Heart left ventricle (tissue), 16 donors: ENCODE measurements at regions of chr10 and their contacts with region 1.

Region 1: GRCh38 chr10:92880233-92880861 is 32.0 kb downstream of the EXOC6 start:
- DNase-seq: peak in 1 of 5 donors; percentile 13
- ATAC-seq: peak in 3 of 4 donors; percentile 57 to 69 (median 59)
- H3K4me3 ChIP-seq: no peak overlapping the region
- H3K27ac ChIP-seq: no peak overlapping the region
- H3K4me1 ChIP-seq: peaks cover 0 to 31% (median 0%) of the 10 kb centered on the region in 12 donors
- H3K27me3 ChIP-seq: no peaks in the 10 kb centered on the region
- CTCF ChIP-seq: peak in 11 of 12 donors; percentile 33 to 76 (median 53)
- POLR2A ChIP-seq: no peak

Region 2: DNA sequence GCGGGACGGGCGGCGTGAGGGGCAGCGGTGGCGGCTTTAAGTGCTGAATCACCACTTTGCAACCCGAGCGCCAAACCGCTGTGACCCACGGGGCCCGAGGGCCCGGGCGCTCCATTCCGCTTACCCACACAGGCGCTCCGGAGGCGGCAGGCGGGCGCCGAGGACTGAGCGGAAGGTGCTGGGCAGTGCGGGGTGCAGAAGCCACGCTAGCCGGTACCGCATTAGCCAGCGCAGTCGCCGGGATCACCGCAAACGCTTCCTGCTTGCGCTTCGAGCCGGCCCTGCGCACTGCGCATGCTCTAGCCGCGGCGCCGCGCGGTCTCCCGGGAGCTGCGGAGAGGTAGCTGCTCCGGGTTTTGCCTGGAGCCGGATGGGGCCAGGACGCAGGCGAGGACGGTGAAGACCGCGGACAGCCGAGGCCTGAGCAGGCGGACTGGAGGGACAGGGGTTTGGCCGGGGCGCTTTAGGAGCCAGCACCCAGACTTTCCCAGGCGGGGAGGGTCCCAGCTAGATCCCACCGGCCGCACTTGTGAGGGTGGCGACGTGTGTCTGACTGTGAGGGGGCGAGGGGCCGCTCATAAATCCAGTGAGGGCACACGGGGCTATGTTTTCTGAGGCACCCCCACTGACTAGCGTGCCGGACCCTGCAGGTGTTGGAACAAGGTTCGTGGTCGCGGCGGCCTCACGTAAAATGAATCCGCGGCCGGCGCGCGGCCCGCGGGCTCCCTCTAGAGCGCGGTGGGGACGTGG is 306.4 kb before region 1 on chr10 and contains the start of gene IDE:
- intact Hi-C with region 1: loop called in 1 of 10 experiments (anchors 10 kb)
- DNase-seq: peak; percentile 89 to 95 (median 91)
- ATAC-seq: peak; percentile 95 to 98 (median 96)
- H3K4me3 ChIP-seq: peak within 1 kb of the TSS; percentile 71 to 98 (median 91)
- H3K27ac ChIP-seq: peak within 1 kb of the TSS; percentile 88 to 99 (median 93)
- H3K4me1 ChIP-seq: peaks cover 0 to 37% (median 22%) of the 10 kb centered on the region in 12 donors
- H3K27me3 ChIP-seq: no peaks in the 10 kb centered on the region
- CTCF ChIP-seq: peak; percentile 67 to 93 (median 84)
- POLR2A ChIP-seq: peak in 1 of 2 donors; percentile 56
- total RNA-seq, gene IDE: 24.6 to 51.3 (median 47.0) TPM

Region 3: DNA sequence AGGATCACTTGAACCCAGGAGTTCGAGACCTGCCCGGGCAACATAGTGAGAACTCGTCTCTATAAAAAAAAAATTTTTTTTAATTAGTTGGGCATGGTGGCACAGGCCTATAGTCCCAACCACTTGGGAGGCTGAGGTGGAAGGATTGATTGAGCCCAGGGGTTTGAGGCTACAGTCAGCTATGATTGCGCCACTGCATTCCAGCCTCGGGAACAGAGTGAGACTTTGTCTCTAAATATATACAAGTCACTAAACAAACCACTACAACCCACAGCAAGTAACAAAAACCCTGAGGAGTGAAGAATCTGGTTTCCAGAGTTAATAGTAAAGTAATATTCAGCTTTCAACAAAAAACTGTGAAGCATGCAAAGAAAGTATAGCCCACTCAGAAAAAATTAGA is 223.3 kb before region 1 on chr10:
- intact Hi-C with region 1: no loop called
- DNase-seq: no peak
- ATAC-seq: no peak
- H3K4me3 ChIP-seq: no peak overlapping the region
- H3K27ac ChIP-seq: no peak overlapping the region
- H3K4me1 ChIP-seq: no peaks in the 10 kb centered on the region
- H3K27me3 ChIP-seq: no peaks in the 10 kb centered on the region
- CTCF ChIP-seq: no peak
- POLR2A ChIP-seq: no peak

Region 4: GRCh38 chr10:92822060-92822634 is 58.2 kb before region 1 on chr10:
- intact Hi-C with region 1: loop called in 4 of 10 experiments (anchors 2 to 10 kb)
- DNase-seq: no peak
- ATAC-seq: peak in 3 of 4 donors; percentile 64 to 86 (median 71)
- H3K4me3 ChIP-seq: no peak overlapping the region
- H3K27ac ChIP-seq: peak overlapping the region in 9 of 12 donors; percentile 1 to 53 (median 37)
- H3K4me1 ChIP-seq: peaks cover 0 to 22% (median 10%) of the 10 kb centered on the region in 12 donors
- H3K27me3 ChIP-seq: no peaks in the 10 kb centered on the region
- CTCF ChIP-seq: no peak
- POLR2A ChIP-seq: no peak

Region 5: GRCh38 chr10:92848441-92849233 is 31.7 kb before region 1 on chr10 and contains the start of gene EXOC6:
- intact Hi-C with region 1: loop called (anchors 5 kb)
- DNase-seq: peak; percentile 85 to 91 (median 87)
- ATAC-seq: peak; percentile 69 to 93 (median 90)
- H3K4me3 ChIP-seq: peak within 1 kb of the TSS; percentile 71 to 100 (median 98)
- H3K27ac ChIP-seq: peak within 1 kb of the TSS; percentile 79 to 95 (median 90)
- H3K4me1 ChIP-seq: peaks cover 0 to 42% (median 10%) of the 10 kb centered on the region in 12 donors
- H3K27me3 ChIP-seq: no peaks in the 10 kb centered on the region
- CTCF ChIP-seq: peak in 5 of 12 donors; percentile 7 to 29 (median 13)
- POLR2A ChIP-seq: no peak
- total RNA-seq, gene EXOC6: 7.8 to 12.3 (median 10.0) TPM

Region 6: GRCh38 chr10:93288654-93289634 is 408.6 kb after region 1 on chr10:
- intact Hi-C with region 1: loop called in 2 of 10 experiments (anchors 5 to 10 kb)
- DNase-seq: peak in 4 of 5 donors; percentile 37 to 66 (median 55)
- ATAC-seq: peak; percentile 26 to 84 (median 76)
- H3K4me3 ChIP-seq: no peak overlapping the region
- H3K27ac ChIP-seq: no peak overlapping the region
- H3K4me1 ChIP-seq: peaks cover 0 to 3% (median 0%) of the 10 kb centered on the region in 12 donors
- H3K27me3 ChIP-seq: no peaks in the 10 kb centered on the region
- CTCF ChIP-seq: peak; percentile 69 to 87 (median 76)
- POLR2A ChIP-seq: no peak